ENCODE measurements at regions of chr10 and their contacts with region 1.

Region 1: DNA sequence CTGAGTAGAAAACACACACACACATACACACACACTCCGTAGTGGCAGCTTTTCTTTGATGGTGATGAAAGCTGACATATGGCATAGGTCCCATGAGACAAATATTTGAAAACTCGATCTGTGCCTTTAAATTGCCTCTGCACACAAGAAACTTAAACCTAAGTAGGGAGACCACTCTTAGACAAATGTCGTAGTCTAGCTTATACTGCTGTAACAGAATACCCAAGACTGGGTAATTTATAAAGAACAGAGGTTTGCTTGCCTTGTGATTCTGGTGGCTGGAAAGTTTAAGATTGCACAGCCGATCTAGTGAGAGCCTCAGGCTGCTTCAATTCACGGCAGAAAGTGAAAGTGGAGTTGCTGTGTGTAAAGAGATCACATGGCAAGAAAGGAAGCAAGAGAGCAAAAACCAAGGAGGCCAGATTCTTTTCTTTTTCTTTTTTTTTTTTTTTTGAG is 489.4 kb upstream of the SORCS1 start:
- DNase-seq: peak in 2 of 14 experiments; percentile 28 to 30
- ATAC-seq: no peak
- H3K4me3 ChIP-seq: no peak overlapping the region
- H3K4me3 Mint-ChIP-seq: peak overlapping the region; percentile 36
- H3K27ac ChIP-seq: no peak overlapping the region
- H3K27ac Mint-ChIP-seq: no peak overlapping the region
- H3K4me1 ChIP-seq: no peaks in the 10 kb centered on the region
- H3K4me1 Mint-ChIP-seq: no peaks in the 10 kb centered on the region
- H3K27me3 ChIP-seq: no peaks in the 10 kb centered on the region
- H3K27me3 Mint-ChIP-seq: no peaks in the 10 kb centered on the region
- CTCF ChIP-seq: no peak

Region 2: DNA sequence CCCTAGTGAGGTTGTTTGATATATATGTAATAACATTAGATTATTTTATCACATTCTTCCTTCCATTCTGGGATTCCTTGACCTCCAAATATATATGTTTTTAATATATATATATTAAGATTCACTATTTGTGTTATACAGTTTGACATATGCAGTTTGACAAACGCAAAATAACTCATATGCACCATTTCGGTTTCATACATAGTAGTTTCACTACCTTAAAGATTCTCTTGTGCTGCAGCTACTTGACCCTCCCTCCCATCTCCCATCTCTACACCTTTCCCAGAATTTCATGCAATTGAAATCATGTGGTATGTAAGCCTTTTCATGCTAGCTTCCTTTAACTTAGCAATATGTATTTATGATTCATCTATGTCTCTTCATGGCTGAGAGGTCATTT is 1768.4 kb before region 1 on chr10:
- CTCF ChIA-PET with region 1: no interaction called
- POLR2A ChIA-PET with region 1: no interaction called
- intact Hi-C with region 1: loop called in 1 of 2 experiments (anchors 10 kb)
- DNase-seq: no peak
- ATAC-seq: no peak
- H3K4me3 ChIP-seq: no peak overlapping the region
- H3K4me3 Mint-ChIP-seq: no peak overlapping the region
- H3K27ac ChIP-seq: no peak overlapping the region
- H3K27ac Mint-ChIP-seq: no peak overlapping the region
- H3K4me1 ChIP-seq: no peaks in the 10 kb centered on the region
- H3K4me1 Mint-ChIP-seq: no peaks in the 10 kb centered on the region
- H3K27me3 ChIP-seq: no peaks in the 10 kb centered on the region
- H3K27me3 Mint-ChIP-seq: no peaks in the 10 kb centered on the region
- CTCF ChIP-seq: no peak

Region 3: DNA sequence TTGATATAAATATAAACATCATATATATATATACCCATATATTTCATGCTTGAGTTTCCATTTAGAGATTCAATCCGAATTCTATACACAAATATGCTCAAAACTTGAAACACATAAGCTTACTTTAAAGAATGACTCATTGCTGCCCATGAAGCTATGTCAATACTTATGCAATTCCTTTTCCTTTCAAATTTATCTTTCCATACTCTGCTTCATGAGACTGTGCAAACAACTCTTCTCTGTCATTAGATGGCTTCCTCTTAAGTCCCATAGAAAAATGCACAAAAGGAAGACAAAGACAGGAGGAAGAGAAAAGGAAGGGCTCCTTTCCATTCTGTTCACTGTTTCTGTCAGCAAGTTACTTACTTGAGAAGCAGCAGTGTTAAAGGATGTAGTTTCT is 406.4 kb after region 1 on chr10:
- CTCF ChIA-PET with region 1: no interaction called
- POLR2A ChIA-PET with region 1: no interaction called
- intact Hi-C with region 1: no loop called
- DNase-seq: no peak
- ATAC-seq: no peak
- H3K4me3 ChIP-seq: no peak overlapping the region
- H3K4me3 Mint-ChIP-seq: no peak overlapping the region
- H3K27ac ChIP-seq: no peak overlapping the region
- H3K27ac Mint-ChIP-seq: no peak overlapping the region
- H3K4me1 ChIP-seq: no peaks in the 10 kb centered on the region
- H3K4me1 Mint-ChIP-seq: no peaks in the 10 kb centered on the region
- H3K27me3 ChIP-seq: no peaks in the 10 kb centered on the region
- H3K27me3 Mint-ChIP-seq: no peaks in the 10 kb centered on the region
- CTCF ChIP-seq: no peak

Region 4: GRCh38 chr10:108275895-108276685 is 622.2 kb after region 1 on chr10:
- CTCF ChIA-PET with region 1: no interaction called
- POLR2A ChIA-PET with region 1: no interaction called
- intact Hi-C with region 1: no loop called
- DNase-seq: no peak
- ATAC-seq: no peak
- H3K4me3 ChIP-seq: no peak overlapping the region
- H3K4me3 Mint-ChIP-seq: no peak overlapping the region
- H3K27ac ChIP-seq: no peak overlapping the region
- H3K27ac Mint-ChIP-seq: peak overlapping the region; percentile 66
- H3K4me1 ChIP-seq: no peaks in the 10 kb centered on the region
- H3K4me1 Mint-ChIP-seq: no peaks in the 10 kb centered on the region
- H3K27me3 ChIP-seq: no peaks in the 10 kb centered on the region
- H3K27me3 Mint-ChIP-seq: no peaks in the 10 kb centered on the region
- CTCF ChIP-seq: no peak